ENCODE measurements at regions of chr22 and their contacts with region 1.

Region 1: GRCh38 chr22:49861642-49862495 is 8.2 kb downstream of the ZBED4 start:
- DNase-seq: no peak
- ATAC-seq: no peak
- H3K4me3 ChIP-seq: no peak overlapping the region
- H3K4me3 Mint-ChIP-seq: peak overlapping the region in 4 of 10 donors; percentile 12 to 23 (median 16)
- H3K27ac ChIP-seq: no peak overlapping the region
- H3K27ac Mint-ChIP-seq: peak overlapping the region in 8 of 9 donors; percentile 23 to 75 (median 58)
- H3K4me1 ChIP-seq: peaks cover 4 to 6% of the 10 kb centered on the region in 2 donors
- H3K4me1 Mint-ChIP-seq: peaks cover 25 to 72% (median 45%) of the 10 kb centered on the region in 7 donors
- H3K27me3 ChIP-seq: no peaks in the 10 kb centered on the region
- H3K27me3 Mint-ChIP-seq: no peaks in the 10 kb centered on the region

Region 2: GRCh38 chr22:49789289-49790141 is 72.4 kb before region 1 on chr22:
- CTCF ChIA-PET with region 1: no interaction called
- POLR2A ChIA-PET with region 1: no interaction called
- intact Hi-C with region 1: loop called in 1 of 2 experiments (anchors 2 kb)
- DNase-seq: peak in 7 of 9 donors; percentile 38 to 64 (median 54)
- ATAC-seq: peak; percentile 68
- H3K4me3 ChIP-seq: peak overlapping the region; percentile 12
- H3K4me3 Mint-ChIP-seq: peak overlapping the region; percentile 61 to 85 (median 78)
- H3K27ac ChIP-seq: peak overlapping the region; percentile 72
- H3K27ac Mint-ChIP-seq: peak overlapping the region; percentile 80 to 95 (median 92)
- H3K4me1 ChIP-seq: peaks cover 12 to 22% of the 10 kb centered on the region in 2 donors
- H3K4me1 Mint-ChIP-seq: peaks cover 32 to 69% (median 62%) of the 10 kb centered on the region in 7 donors
- H3K27me3 ChIP-seq: no peaks in the 10 kb centered on the region
- H3K27me3 Mint-ChIP-seq: no peaks in the 10 kb centered on the region

Measured in naive thymus-derived CD4-positive, alpha-beta T cell (primary cell).